ENCODE measurements at regions of chrX and their contacts with region 1.

Region 1: DNA sequence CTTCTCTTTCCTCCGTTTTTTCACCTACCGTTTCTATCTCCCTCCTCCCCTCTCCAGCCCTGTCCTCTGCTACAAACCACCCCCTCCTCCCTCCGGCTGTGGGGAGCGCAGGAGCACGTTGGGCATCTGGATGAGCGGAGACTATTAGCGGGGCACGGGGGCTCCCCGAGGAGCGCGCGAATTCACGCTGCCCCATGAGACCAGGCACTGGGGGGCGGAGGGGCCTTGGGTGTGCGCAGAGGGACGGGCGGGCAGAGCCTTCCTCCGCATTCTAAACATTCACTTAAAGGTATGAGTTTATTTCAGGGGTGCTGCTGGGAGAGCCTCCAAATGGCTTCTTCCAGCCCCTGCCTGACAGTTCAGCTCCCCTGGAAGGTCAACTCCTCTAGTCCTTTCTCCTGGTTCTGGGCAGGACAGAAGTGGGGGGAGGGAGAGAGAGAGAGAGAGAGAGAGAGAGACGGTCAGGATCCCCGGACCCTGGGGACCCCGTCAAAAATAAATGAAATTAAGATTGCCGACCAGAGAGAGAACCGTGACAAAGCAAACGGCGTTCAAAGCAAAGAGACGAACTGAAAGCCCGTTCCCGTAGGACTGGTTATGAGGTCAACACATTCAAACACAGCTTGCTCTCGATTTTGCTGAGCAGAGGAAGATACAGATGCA is 5.0 kb downstream of the SHOX start:
- DNase-seq: no peak
- H3K4me3 Mint-ChIP-seq: no peak overlapping the region
- H3K27ac Mint-ChIP-seq: no peak overlapping the region
- H3K4me1 Mint-ChIP-seq: no peaks in the 10 kb centered on the region
- H3K27me3 Mint-ChIP-seq: peaks cover 59% of the 10 kb centered on the region

Region 2: DNA sequence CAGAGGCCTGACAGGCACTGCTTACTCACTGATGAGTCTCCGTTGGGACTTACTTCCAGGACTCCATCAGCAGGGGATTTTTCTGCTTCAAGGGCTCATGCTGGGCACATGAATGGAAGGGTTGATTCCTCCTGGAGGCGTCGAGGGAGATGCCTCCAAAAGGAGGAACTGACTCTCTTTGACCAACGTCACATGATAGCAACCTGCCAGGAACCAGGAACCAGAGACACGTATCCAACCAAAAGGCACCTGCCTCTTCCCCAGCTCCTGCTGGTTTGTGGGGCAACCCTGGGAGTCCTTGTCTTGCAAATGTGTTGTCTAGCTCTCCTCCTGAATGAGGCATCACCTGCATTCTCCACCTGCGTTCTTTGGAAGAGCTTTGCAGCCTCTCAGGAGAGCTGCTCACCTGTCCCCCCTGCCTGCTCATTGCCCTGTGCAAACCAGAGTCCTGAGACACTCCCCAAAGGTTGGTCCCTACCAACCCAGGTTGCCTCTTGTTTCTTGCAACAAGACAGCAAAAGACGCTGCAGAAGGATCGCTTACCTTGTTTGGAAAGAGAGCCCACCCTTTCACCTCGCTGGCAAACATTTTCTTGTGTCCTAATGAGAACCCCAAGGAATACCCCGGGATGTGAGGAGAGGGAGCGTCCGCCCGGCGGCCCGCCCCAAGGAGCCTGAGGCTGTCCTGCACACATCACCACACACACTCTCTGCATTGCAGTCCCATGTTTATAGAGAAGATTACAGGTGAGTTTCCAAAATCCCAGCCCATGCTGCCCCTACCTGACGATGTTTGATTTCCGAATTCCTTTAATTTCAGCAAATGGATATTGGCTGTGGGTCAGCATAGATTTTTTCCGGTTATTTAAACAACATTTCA is 35.5 kb before region 1 on chrX:
- intact Hi-C with region 1: no loop called
- DNase-seq: no peak
- H3K4me3 Mint-ChIP-seq: no peak overlapping the region
- H3K27ac Mint-ChIP-seq: no peak overlapping the region
- H3K4me1 Mint-ChIP-seq: no peaks in the 10 kb centered on the region
- H3K27me3 Mint-ChIP-seq: no peaks in the 10 kb centered on the region

Region 3: GRCh38 chrX:619812-620531 is 15.6 kb before region 1 on chrX:
- intact Hi-C with region 1: loop called (anchors 2 kb)
- DNase-seq: no peak
- H3K4me3 Mint-ChIP-seq: no peak overlapping the region
- H3K27ac Mint-ChIP-seq: no peak overlapping the region
- H3K4me1 Mint-ChIP-seq: peaks cover 2% of the 10 kb centered on the region
- H3K27me3 Mint-ChIP-seq: peaks cover 36% of the 10 kb centered on the region

Region 4: DNA sequence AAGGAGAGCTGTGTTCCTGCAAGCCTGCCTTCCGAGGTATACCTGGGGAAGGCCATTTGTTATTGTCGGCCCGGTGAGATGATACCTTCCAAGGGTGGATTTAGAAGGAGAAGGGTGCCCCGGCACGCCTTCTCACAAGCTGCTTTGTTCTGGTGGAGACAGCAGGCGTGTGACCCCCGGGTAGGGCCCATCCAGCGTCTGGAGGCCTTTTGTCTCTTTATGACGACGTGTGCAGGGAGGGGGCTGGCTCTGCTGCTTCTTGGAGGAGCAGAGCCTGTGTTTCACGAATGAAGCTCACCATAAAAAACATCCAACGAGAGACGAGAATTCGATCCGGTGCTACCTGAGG is 40.4 kb after region 1 on chrX:
- intact Hi-C with region 1: no loop called
- DNase-seq: no peak
- H3K4me3 Mint-ChIP-seq: no peak overlapping the region
- H3K27ac Mint-ChIP-seq: no peak overlapping the region
- H3K4me1 Mint-ChIP-seq: no peaks in the 10 kb centered on the region
- H3K27me3 Mint-ChIP-seq: no peaks in the 10 kb centered on the region

Measured in activated T-helper 2 cell treated with anti-CD3 and anti-CD28 coated beads, Interferon-gamma antibody, Interleukin-2, Interleukin-4, amounts not matched to agents 10 μg/mL and 5 μg/mL and 100 μg/mL, durations not matched to agents 14 hours and 24 hours and 36 hours (primary cell).